RWPE1 (cell line): ENCODE measurements at regions of chr20 and their contacts with region 1.

Region 1: GRCh38 chr20:45311589-45312211 is 3.6 kb upstream of the MATN4 start:
- DNase-seq: peak; percentile 79
- H3K27ac ChIP-seq: no peak overlapping the region
- CTCF ChIP-seq: peak; percentile 98

Region 2: GRCh38 chr20:45300961-45301360 is 10.7 kb before region 1 on chr20:
- CTCF ChIA-PET with region 1: interaction called, 15 read pairs
- POLR2A ChIA-PET with region 1: no interaction called
- DNase-seq: peak; percentile 46
- H3K27ac ChIP-seq: no peak overlapping the region
- CTCF ChIP-seq: no peak; the same call in 1 of the 2 replicates

Region 3: DNA sequence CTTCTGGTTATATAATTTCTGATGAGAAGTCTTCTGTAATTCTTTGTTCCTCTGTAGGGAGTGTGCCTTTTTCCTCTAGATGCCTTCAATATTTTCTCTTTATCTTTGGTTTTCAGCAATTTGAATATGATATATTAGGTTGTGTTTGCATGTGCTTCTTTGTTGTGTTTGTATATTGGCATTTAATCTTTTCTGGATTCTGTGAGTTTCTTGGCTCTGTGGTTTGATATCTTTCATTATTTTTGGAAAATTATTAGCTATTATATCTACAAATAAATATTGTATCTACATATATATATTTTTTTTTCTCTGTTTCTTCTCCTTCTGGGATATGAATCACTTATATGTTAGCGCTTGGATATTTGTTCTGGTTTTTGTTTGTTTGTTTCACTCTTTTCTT is 87.3 kb after region 1 on chr20:
- CTCF ChIA-PET with region 1: no interaction called
- POLR2A ChIA-PET with region 1: no interaction called
- DNase-seq: no peak
- H3K27ac ChIP-seq: no peak overlapping the region
- CTCF ChIP-seq: no peak